Activated CD8-positive, alpha-beta T cell treated with anti-CD3 and anti-CD28 coated beads, Interleukin-2, amount 10 ng/mL, durations not matched to agents 7 days and 5 days (primary cell): ENCODE measurements at regions of chr15 and their contacts with region 1.

Region 1: DNA sequence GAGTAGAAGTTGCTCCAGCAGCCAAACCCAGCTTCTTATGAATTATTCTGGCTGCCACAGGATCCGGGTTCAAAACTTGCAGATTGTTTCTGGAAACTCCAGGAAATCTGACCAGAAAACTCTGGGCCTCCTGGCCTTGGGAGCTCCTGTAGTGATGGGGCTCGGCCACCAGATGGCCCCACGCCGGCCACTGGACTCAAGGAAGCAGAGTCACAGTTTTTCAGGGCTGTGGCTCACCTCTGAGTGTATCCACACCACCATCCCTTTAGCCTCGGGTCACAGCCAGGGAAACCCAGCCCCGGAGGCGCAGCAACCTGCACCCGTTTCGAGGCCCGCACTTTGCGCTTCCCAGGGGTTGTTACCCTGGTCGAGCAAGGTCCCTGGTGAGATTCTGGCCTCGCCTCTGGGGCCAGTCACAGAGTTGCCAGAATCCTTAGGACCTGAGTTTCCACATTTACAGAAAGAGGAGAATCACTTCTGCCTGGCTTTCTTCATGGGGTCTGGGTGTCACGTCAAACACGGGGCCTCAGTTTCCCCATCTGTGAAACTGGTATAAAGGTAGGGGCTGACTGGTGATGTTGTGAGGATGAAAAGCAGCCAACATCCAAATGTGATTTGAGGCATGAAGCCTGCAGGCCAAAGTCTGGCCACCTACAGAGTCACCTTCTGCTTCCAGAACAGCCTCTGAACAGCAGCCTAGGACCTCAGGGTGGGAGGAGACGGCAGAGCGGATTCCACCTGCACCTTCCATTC is 53.5 kb upstream of the LCTL start:
- DNase-seq: peak; percentile 63
- ATAC-seq: peak; percentile 64
- H3K4me3 Mint-ChIP-seq: no peak overlapping the region
- H3K27ac Mint-ChIP-seq: no peak overlapping the region
- H3K4me1 Mint-ChIP-seq: peaks cover 30% of the 10 kb centered on the region
- H3K27me3 Mint-ChIP-seq: peaks cover 22% of the 10 kb centered on the region

Region 2: DNA sequence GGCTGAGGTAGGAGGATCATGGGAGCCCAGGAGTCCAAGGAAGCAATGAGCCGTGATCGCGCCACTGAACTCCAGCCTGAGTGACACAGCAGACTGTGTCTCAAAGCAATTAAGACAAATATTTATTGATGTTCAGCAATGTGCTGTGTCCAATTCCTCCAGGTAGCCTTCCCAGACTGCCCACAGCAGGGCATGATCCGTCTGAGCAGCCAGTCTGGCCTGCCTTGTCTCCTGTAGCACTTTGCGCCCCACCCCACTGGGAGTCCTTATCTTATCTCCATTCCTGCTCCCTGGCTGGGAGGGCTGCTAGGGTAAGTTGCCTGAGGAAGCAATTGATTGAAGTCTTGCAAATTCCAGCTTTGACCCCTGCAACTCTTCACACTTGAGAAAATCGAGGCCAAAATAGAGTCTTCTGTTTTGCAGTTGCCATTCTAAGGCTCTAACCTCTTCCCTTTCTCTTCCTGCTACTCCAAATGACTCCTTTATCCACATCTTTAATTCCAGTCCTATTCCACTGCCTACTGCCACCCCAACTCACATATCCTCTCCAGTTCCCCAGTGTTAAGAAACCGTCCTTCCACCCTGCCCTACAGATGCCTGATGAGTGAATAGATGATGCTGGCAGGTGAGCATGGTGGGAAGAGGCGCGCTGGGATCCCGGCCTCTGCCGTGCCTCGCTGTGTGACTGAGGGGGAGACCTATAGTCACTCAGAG is 26.7 kb before region 1 on chr15:
- CTCF ChIA-PET with region 1: no interaction called
- POLR2A ChIA-PET with region 1: no interaction called
- DNase-seq: no peak
- ATAC-seq: no peak
- H3K4me3 Mint-ChIP-seq: no peak overlapping the region
- H3K27ac Mint-ChIP-seq: no peak overlapping the region
- H3K4me1 Mint-ChIP-seq: peaks cover 7% of the 10 kb centered on the region
- H3K27me3 Mint-ChIP-seq: peaks cover 14% of the 10 kb centered on the region

Region 3: GRCh38 chr15:66603301-66604179 is 15.8 kb before region 1 on chr15:
- CTCF ChIA-PET with region 1: interaction called, 25 read pairs
- POLR2A ChIA-PET with region 1: no interaction called
- DNase-seq: peak; percentile 74
- ATAC-seq: peak; percentile 88
- H3K4me3 Mint-ChIP-seq: no peak overlapping the region
- H3K27ac Mint-ChIP-seq: no peak overlapping the region
- H3K4me1 Mint-ChIP-seq: peaks cover 9% of the 10 kb centered on the region
- H3K27me3 Mint-ChIP-seq: peaks cover 18% of the 10 kb centered on the region

Region 4: GRCh38 chr15:66702035-66702786 is 82.9 kb after region 1 on chr15 and contains the start of gene SMAD6:
- CTCF ChIA-PET with region 1: interaction called, 10 read pairs
- POLR2A ChIA-PET with region 1: interaction called, 3 read pairs
- DNase-seq: peak; percentile 88
- ATAC-seq: peak; percentile 32
- H3K4me3 Mint-ChIP-seq: peak within 1 kb of the TSS; percentile 87
- H3K27ac Mint-ChIP-seq: peak within 1 kb of the TSS; percentile 87
- H3K4me1 Mint-ChIP-seq: peaks cover 21% of the 10 kb centered on the region
- H3K27me3 Mint-ChIP-seq: peaks cover 22% of the 10 kb centered on the region
- total RNA-seq, gene SMAD6: 0.97 to 1.2 TPM